Endothelial cell of umbilical vein (primary cell): ENCODE measurements at regions of chr4 and their contacts with region 1.

Region 1: DNA sequence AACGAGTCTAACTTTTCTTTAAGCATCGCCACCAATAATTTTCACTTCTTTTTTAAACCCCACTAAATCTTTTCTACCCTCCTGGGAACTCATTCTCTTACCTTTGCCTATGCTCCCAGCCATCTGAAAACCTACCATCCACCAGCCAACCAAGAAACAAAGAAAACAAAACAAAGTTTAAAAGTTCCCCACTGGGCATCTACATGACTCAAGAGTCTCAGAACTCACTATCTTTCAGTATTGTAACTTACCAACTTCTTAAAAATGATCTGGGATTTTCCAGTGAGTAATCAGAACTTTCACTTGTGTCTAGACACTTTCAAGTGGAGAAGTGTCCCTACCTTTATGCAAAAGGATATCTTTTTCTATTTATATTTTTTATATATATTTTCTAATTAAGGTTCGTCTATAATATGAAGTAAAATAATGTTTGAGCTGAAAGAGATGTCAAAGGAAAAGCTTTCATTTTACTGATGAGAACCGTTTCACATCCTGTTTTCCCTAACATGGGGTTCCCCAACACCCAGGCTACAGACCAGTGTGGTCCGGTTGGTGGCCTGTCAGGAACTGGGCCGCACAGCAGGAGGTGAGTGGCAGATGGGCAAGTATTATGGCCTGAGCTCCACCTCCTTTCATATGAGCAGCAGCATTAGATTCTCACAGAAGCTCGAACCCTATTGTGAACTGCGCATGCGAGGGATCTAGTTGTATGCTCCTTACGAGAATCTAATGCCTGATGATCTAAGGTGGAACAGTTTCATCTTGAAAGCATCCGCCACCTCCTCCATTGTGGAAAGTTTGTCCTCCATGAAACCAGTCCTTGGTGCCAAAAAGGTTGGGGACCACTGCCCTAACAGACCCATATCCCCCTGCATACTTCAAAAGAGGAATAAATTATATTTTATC is 9.8 kb upstream of the TIGD2 start:
- DNase-seq: no peak
- H3K4me3 ChIP-seq: no peak overlapping the region
- H3K27ac ChIP-seq: no peak overlapping the region
- H3K4me1 ChIP-seq: no peaks in the 10 kb centered on the region
- H3K27me3 ChIP-seq: peaks cover 9 to 14% of the 10 kb centered on the region in 2 experiments
- CTCF ChIP-seq: no peak
- POLR2A ChIP-seq: no peak

Region 2: GRCh38 chr4:89363786-89364185 is 262.3 kb after region 1 on chr4:
- CTCF ChIA-PET with region 1: no interaction called
- POLR2A ChIA-PET with region 1: interaction called, 11 read pairs
- dilution Hi-C with region 1: no loop called
- intact Hi-C with region 1: no loop called
- DNase-seq: no peak
- H3K4me3 ChIP-seq: no peak overlapping the region
- H3K27ac ChIP-seq: no peak overlapping the region
- H3K4me1 ChIP-seq: no peaks in the 10 kb centered on the region
- H3K27me3 ChIP-seq: peaks cover 2 to 6% of the 10 kb centered on the region in 2 experiments
- CTCF ChIP-seq: no peak
- POLR2A ChIP-seq: no peak